AG04450 (cell line): ENCODE measurements at regions of chr13 and their contacts with region 1.

Region 1: DNA sequence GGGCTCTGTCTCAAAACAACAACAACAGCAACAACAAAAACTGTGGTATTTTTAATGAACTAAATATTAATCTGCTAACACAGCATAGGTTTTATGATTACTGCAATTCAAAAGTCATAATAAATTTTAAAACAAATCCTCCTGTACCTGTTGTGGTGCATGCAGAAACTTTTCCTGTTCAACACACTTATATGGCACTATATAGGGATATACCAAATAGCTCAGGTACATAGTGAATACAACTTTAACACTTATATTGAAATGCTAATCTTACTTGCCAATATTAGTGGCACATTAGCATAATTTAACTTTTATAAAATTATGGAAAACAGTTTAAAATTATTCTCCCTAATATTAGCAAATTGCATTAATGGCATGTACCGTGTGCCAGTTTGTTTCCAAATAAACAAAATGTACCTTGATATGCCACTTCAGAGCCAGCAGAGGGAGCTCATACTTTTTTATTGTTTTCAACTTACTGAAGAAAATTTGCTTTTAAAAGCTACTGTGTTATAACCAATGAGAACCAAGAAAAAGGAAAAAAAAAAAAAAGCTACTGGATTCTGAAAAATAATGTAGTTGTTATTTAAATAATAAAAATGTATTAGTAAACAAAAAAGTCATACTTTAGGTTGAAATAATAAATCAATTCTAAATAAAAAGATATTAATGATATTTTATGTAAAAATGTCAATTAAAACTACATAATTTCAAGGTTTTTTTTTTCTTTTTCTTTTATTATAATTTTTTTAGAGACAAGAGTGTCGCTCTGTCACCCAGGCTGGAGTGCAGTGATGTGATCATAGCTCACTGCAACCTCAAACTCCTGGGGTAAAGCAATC is 18.0 kb upstream of the RBM26 start:
- DNase-seq: peak; percentile 10
- H3K4me3 ChIP-seq: no peak overlapping the region
- H3K27ac ChIP-seq: no peak overlapping the region
- H3K27me3 ChIP-seq: no peaks in the 10 kb centered on the region
- CTCF ChIP-seq: peak; percentile 70

Region 2: DNA sequence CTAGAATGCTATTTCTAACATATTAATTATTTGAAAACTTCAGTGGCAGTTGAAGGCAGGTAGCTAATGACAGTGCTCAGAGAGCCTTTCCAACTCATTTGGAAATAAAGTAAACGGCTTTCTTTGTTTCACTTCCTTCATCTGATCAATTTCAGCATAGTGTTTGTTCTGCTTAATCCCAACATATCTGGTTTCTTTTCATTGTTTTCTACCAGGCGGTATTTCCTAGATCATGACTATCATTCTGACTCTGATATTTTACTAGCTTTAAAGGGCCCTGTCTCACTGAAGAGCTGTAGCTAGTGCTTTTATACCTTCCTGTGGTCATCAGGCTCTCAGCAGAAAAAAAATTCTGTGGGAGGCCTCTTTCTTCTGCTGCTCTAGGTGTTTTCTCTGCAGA is 196.6 kb before region 1 on chr13:
- CTCF ChIA-PET with region 1: no interaction called
- POLR2A ChIA-PET with region 1: no interaction called
- DNase-seq: no peak
- H3K4me3 ChIP-seq: no peak overlapping the region
- H3K27ac ChIP-seq: no peak overlapping the region
- H3K27me3 ChIP-seq: no peaks in the 10 kb centered on the region
- CTCF ChIP-seq: no peak

Region 3: DNA sequence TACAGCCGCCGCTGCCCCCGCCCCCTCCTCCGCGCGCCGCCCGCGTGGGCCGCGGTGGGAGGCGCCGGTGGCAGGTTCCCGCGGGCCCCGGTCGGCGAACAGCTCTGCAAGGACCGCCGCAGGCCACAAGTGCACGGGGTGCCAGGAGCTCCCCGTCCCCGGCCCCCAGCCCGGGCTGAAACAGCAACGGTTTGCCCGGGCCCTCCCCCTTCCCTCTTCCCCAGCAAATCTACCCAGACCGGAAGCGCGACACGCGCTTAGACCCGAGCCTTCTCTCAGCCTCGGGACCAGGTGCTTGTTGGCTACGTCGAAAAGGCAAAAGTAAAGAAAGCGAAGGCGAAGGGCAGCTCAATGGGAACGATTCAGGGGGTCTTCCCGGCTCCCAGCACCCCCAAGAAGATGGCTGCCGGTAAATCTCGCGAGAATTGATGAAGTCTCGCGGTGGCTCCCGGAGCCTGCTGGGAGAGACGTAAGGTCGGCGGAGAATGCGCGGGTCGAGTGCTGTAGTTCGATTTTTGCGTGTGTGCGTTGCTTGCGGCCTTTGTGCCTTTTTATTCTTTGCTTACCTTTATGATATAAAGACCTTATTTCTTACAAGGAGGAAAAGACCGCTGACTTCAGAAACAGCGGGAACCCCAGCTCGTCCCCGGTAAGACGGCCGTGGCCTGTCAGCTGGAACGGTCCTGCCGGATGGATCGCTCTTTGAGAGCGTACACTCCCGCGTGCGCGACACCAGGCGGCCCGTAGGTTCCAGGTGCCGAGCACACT is 18.0 kb before region 1 on chr13 and contains the start of gene RBM26:
- CTCF ChIA-PET with region 1: interaction called, 25 read pairs
- POLR2A ChIA-PET with region 1: no interaction called
- DNase-seq: peak; percentile 89
- H3K4me3 ChIP-seq: peak within 1 kb of the TSS; percentile 92
- H3K27ac ChIP-seq: peak within 1 kb of the TSS; percentile 82
- H3K27me3 ChIP-seq: no peaks in the 10 kb centered on the region
- CTCF ChIP-seq: no peak; the same call in 1 of the 2 replicates
- polyA plus RNA-seq, gene RBM26: 20.8 and 29.1 TPM in 2 replicates

Region 4: GRCh38 chr13:79435561-79435990 is 11.6 kb after region 1 on chr13:
- CTCF ChIA-PET with region 1: interaction called, 39 read pairs
- POLR2A ChIA-PET with region 1: no interaction called
- DNase-seq: no peak
- H3K4me3 ChIP-seq: no peak overlapping the region
- H3K27ac ChIP-seq: no peak overlapping the region
- H3K27me3 ChIP-seq: no peaks in the 10 kb centered on the region
- CTCF ChIP-seq: no peak

Region 5: DNA sequence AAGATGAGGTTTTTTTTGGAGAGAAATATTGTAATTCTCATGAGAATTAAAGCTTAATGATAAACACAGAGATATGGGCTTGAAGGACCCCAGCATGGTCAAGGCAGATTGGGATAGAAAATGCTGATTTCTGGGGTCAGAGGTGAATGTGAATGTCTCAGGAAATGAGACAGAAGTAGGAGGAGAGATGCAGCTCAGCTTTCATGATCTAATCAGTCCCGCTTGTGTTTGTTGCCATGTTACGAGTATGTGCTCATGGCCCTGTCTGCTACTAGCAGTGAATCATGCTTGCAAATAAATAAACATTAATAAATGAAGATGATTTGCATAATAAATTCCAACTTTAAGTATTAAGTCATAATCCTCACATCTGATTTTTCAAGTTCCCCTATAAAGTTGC is 33.9 kb after region 1 on chr13:
- CTCF ChIA-PET with region 1: interaction called, 36 read pairs
- POLR2A ChIA-PET with region 1: no interaction called
- DNase-seq: peak; percentile 36
- H3K4me3 ChIP-seq: no peak overlapping the region
- H3K27ac ChIP-seq: no peak overlapping the region
- H3K27me3 ChIP-seq: no peaks in the 10 kb centered on the region
- CTCF ChIP-seq: no peak

Region 6: DNA sequence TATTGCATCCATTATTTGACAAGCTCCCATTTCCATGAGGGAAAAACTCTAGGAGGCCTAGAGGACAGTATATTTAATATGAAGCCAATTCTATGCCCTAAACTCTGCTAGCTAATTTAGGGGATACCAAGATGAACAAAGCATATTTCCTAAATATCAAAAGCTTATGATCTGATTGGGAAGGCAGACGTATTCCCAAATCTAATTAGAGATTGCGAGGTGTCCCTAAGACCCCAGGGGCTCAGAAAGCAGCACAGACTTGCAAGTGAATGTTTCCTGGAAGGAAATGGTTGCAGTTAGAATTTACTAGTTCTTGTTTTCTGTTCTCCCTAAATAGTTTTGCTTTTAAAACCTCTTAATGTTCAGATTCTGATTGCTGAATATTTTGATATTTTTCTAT is 87.6 kb after region 1 on chr13:
- CTCF ChIA-PET with region 1: interaction called, 12 read pairs
- POLR2A ChIA-PET with region 1: no interaction called
- DNase-seq: no peak
- H3K4me3 ChIP-seq: no peak overlapping the region
- H3K27ac ChIP-seq: no peak overlapping the region
- H3K27me3 ChIP-seq: no peaks in the 10 kb centered on the region
- CTCF ChIP-seq: no peak

Region 7: GRCh38 chr13:79528759-79529191 is 104.8 kb after region 1 on chr13:
- CTCF ChIA-PET with region 1: interaction called, 454 read pairs
- POLR2A ChIA-PET with region 1: no interaction called
- DNase-seq: no peak
- H3K4me3 ChIP-seq: no peak overlapping the region
- H3K27ac ChIP-seq: no peak overlapping the region
- H3K27me3 ChIP-seq: no peaks in the 10 kb centered on the region
- CTCF ChIP-seq: no peak

Region 8: GRCh38 chr13:79548902-79549301 is 124.9 kb after region 1 on chr13:
- CTCF ChIA-PET with region 1: interaction called, 165 read pairs
- POLR2A ChIA-PET with region 1: interaction called, 11 read pairs
- DNase-seq: no peak
- H3K4me3 ChIP-seq: no peak overlapping the region
- H3K27ac ChIP-seq: no peak overlapping the region
- H3K27me3 ChIP-seq: no peaks in the 10 kb centered on the region
- CTCF ChIP-seq: peak; percentile 50

Region 9: DNA sequence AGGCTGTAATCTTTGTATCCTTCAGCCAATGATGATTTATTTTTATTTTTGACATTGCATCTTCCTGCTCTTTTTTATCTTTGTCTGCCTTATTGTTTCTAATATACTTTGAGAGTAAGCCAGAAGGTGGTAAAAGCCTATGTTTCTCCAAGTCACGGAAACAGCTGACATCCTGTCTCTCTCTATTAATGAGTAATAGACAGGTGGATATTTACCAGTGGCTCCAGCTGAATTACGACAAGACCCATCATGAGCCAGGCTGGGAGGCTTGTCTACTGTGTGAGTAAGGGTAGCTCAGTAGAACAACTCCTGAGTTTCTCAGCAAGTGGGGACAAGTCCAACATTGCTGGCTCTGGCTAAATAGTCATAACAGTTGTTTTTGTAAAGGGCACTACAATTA is 223.5 kb after region 1 on chr13:
- CTCF ChIA-PET with region 1: no interaction called
- POLR2A ChIA-PET with region 1: no interaction called
- DNase-seq: no peak
- H3K4me3 ChIP-seq: no peak overlapping the region
- H3K27ac ChIP-seq: no peak overlapping the region
- H3K27me3 ChIP-seq: peaks cover 2% of the 10 kb centered on the region
- CTCF ChIP-seq: no peak

Region 10: GRCh38 chr13:79724348-79725103 is 300.5 kb after region 1 on chr13:
- CTCF ChIA-PET with region 1: no interaction called
- POLR2A ChIA-PET with region 1: no interaction called
- DNase-seq: no peak
- H3K4me3 ChIP-seq: no peak overlapping the region
- H3K27ac ChIP-seq: no peak overlapping the region
- H3K27me3 ChIP-seq: no peaks in the 10 kb centered on the region
- CTCF ChIP-seq: no peak